ENCODE measurements at regions of chr2 and their contacts with region 1.

Region 1: DNA sequence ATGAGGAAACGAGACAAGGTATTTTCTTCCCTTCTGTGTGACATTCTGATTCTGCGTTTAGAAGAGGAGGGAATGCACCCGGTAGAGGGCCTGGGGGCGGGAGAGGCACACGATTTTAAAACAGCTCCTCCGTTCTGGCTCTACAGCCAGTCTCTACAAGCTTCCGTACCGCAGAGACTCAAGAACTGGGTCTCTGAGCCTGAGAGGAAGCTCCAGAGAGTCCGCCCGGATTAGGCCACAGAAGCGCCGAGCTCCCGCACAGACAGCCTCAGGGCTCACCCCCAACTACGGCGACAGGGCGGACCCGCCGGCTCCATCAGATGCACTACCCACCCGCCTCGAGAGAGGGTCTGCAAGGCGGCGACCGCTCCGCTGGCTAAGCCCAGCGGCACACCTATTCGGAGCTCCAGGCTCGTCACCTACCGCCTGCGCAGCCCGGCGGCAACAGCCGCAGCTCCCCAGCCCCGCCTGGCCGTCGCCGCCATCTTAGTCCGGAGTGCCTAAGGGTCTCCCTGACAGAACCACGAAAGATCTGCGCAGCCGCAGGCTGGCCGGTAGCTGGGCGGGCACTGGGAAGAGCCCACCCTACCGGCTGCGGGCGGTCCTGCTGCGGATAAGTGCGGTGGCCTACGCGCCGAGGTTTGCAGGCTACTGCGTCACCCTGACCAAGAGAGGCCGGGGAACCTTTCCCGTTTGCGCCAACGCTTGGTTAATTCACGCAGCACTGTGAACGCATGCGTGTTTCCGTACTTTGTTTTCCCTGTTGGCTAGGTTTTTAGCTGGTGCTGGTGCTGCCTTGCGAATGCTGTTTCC is at the start of gene NFU1:
- DNase-seq: peak; percentile 79
- ATAC-seq: peak; percentile 97
- H3K4me3 ChIP-seq: peak within 1 kb of the TSS; percentile 76
- H3K27ac ChIP-seq: peak within 1 kb of the TSS; percentile 89
- H3K4me1 ChIP-seq: peaks cover 9% of the 10 kb centered on the region; the same call in 1 of the 2 replicates
- H3K27me3 ChIP-seq: no peaks in the 10 kb centered on the region
- CTCF ChIP-seq: peak; percentile 61 to 76 (median 63)
- EP300 ChIP-seq: peak; percentile 21 to 73; a peak in 2 of 4 replicates
- POLR2A ChIP-seq: peak; percentile 98
- RAD21 ChIP-seq: peak; percentile 24; the same call in 1 of the 2 replicates
- polyA plus RNA-seq, gene NFU1: 38.5 to 61.2 TPM

Region 2: DNA sequence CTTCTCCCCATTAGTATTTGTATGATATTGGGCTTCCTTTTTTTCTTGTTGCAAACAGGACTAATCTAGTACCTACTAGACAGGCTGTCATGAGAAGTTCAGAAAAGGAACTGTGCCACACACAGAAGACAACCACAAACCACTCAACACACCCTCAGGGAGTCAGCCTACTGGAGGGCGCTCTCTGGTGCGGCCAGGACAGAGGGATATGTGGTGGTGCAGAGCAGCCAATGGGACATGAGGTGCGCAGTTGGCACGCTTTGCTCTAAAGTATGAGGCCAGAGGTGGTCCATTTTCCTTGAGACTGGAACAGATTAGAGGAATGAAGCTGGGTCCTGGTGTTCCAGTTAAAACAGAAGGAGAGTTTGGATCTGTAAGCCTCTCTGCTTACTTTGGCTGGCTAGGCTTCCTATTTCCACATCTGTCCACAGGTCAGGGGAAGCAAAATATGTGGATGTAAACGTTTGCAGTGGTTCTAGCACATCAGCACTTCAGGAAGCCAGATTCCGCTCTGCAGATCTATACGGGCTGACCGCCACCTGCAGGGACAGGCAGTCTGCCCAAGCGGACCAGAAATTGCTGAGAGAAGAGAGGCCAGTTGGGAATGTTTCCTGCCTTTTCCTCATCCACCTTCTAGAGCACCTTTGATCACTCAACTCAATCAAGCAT is 164.2 kb before region 1 on chr2:
- CTCF ChIA-PET with region 1: no interaction called
- POLR2A ChIA-PET with region 1: no interaction called
- RAD21 ChIA-PET with region 1: no interaction called
- SMC1A ChIA-PET with region 1: no interaction called
- in situ Hi-C with region 1: no loop called
- intact Hi-C with region 1: no loop called
- DNase-seq: no peak
- ATAC-seq: 0 out of 3 replicates have a peak, but pooled peaks have one; percentile 18
- H3K4me3 ChIP-seq: no peak overlapping the region
- H3K27ac ChIP-seq: no peak overlapping the region
- H3K4me1 ChIP-seq: no peaks in the 10 kb centered on the region
- H3K27me3 ChIP-seq: 0 out of 4 replicates have a peak, but pooled peaks cover 0 to 2% of the 10 kb centered on the region in 2 experiments
- CTCF ChIP-seq: no peak
- EP300 ChIP-seq: no peak
- POLR2A ChIP-seq: no peak
- RAD21 ChIP-seq: no peak

Region 3: GRCh38 chr2:69375494-69376353 is 61.4 kb before region 1 on chr2:
- CTCF ChIA-PET with region 1: interaction called, 24 read pairs
- POLR2A ChIA-PET with region 1: interaction called, 6 read pairs
- RAD21 ChIA-PET with region 1: interaction called, 27 read pairs
- SMC1A ChIA-PET with region 1: interaction called, 4 read pairs
- in situ Hi-C with region 1: no loop called
- intact Hi-C with region 1: no loop called
- DNase-seq: no peak
- ATAC-seq: peak; percentile 90
- H3K4me3 ChIP-seq: no peak overlapping the region
- H3K27ac ChIP-seq: no peak overlapping the region
- H3K4me1 ChIP-seq: no peaks in the 10 kb centered on the region
- H3K27me3 ChIP-seq: no peaks in the 10 kb centered on the region
- CTCF ChIP-seq: peak; percentile 49 to 63 (median 62); a peak in 5 of 6 replicates
- EP300 ChIP-seq: no peak
- POLR2A ChIP-seq: no peak
- RAD21 ChIP-seq: peak; percentile 61

Region 4: DNA sequence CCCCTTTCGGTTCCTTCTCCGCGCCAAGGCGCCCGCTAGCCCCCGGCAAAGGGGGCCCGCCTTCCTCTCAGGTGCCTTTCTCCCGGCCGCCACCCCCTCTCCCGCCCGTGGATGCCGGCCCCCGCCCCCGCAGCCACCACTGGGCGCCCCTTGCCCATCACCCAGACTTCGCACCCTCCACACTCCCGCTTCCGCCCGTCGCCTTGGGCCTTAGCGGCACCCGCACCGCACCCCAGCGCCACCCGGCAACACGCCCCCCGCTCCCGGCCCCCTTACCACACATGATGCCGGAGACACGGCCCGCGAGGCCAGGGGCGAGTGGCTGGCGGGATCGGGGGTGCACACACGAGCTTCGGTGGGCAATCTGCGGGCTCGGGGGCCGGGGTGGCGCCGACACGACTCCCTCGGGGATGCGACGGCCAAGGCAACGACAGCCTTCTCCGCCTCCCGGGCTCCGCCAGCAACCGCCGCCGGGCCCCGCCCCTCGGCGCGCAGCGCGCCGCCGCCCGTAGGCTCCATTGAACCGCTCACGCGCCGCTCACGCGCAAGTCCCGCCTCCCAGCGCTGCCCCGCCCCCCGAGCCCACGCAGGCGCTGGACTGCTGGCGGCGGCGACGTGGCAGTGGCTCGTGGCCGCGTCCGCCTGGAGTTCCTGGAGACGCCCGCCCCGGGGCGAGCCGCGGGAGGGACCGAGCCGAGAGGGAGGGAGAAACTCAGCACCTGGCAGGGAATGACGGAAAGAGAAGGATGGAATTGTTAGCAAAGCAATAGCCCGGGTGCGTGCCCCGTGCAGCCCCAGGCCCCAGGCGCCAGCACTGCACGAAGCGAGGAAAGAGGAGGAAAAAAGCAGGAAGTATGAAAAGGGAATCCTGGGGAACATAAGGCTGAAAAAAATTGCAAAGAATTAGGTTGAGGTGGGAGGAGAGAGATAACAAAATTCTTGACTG is 50.1 kb before region 1 on chr2 and contains the start of gene GFPT1:
- CTCF ChIA-PET with region 1: interaction called, 17 read pairs
- POLR2A ChIA-PET with region 1: interaction called, 16 read pairs
- RAD21 ChIA-PET with region 1: interaction called, 16 read pairs
- SMC1A ChIA-PET with region 1: interaction called, 9 read pairs
- in situ Hi-C with region 1: no loop called
- intact Hi-C with region 1: loop called (anchors 2 kb)
- DNase-seq: peak; percentile 54
- ATAC-seq: peak; percentile 93
- H3K4me3 ChIP-seq: peak within 1 kb of the TSS; percentile 88
- H3K27ac ChIP-seq: peak within 1 kb of the TSS; percentile 82
- H3K4me1 ChIP-seq: peaks cover 12% of the 10 kb centered on the region; the same call in 1 of the 2 replicates
- H3K27me3 ChIP-seq: no peaks in the 10 kb centered on the region
- CTCF ChIP-seq: no peak
- EP300 ChIP-seq: no peak
- POLR2A ChIP-seq: peak; percentile 95
- RAD21 ChIP-seq: no peak
- polyA plus RNA-seq, gene GFPT1: 10.1 to 13.0 TPM

Region 5: GRCh38 chr2:69405306-69405705 is 31.8 kb before region 1 on chr2:
- CTCF ChIA-PET with region 1: no interaction called
- POLR2A ChIA-PET with region 1: no interaction called
- RAD21 ChIA-PET with region 1: no interaction called
- SMC1A ChIA-PET with region 1: no interaction called
- in situ Hi-C with region 1: no loop called
- intact Hi-C with region 1: no loop called
- DNase-seq: no peak
- ATAC-seq: no peak
- H3K4me3 ChIP-seq: no peak overlapping the region
- H3K27ac ChIP-seq: no peak overlapping the region
- H3K4me1 ChIP-seq: no peaks in the 10 kb centered on the region
- H3K27me3 ChIP-seq: no peaks in the 10 kb centered on the region
- CTCF ChIP-seq: no peak
- EP300 ChIP-seq: no peak
- POLR2A ChIP-seq: no peak
- RAD21 ChIP-seq: no peak

Region 6: DNA sequence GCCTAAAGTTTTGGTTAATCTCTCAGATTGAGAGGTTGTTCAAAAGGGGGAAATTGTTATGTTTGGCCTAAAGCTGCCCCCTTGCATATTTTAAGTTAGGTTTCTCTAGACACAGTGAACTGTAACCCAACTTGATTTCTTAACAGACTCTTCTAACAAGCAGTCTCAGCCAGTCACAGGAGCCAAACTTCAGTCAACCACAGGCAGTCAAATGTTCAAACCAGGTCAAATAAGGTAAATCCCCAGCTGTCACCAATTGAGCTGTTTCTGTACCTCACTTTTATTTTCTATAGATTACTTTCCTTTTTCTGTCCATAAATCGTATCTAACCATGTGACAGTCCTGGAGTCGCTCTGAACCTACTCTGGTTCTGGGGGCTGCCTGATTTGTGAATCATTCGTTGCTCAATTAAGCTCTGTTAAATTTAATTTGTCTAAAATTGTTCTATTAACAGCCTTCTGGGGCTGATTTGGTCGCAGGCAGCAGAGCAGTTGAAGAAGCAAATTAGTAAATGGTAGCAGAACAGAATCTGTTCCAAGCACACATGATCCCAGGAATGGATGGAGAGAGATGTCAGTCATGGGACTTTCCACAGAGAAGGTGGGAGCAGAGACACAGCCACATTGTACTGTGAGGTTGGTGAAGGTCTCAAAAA is 16.5 kb after region 1 on chr2:
- CTCF ChIA-PET with region 1: interaction called, 18 read pairs
- POLR2A ChIA-PET with region 1: interaction called, 11 read pairs
- RAD21 ChIA-PET with region 1: interaction called, 6 read pairs
- SMC1A ChIA-PET with region 1: interaction called, 12 read pairs
- in situ Hi-C with region 1: no loop called
- intact Hi-C with region 1: no loop called
- DNase-seq: peak; percentile 61
- ATAC-seq: peak; percentile 97
- H3K4me3 ChIP-seq: no peak overlapping the region
- H3K27ac ChIP-seq: peak overlapping the region; percentile 20; the same call in 1 of the 2 replicates
- H3K4me1 ChIP-seq: peaks cover 9% of the 10 kb centered on the region; the same call in 1 of the 2 replicates
- H3K27me3 ChIP-seq: no peaks in the 10 kb centered on the region
- CTCF ChIP-seq: no peak
- EP300 ChIP-seq: no peak
- POLR2A ChIP-seq: no peak
- RAD21 ChIP-seq: no peak

Region 7: GRCh38 chr2:69549421-69549820 is 112.3 kb after region 1 on chr2:
- CTCF ChIA-PET with region 1: interaction called, 4 read pairs
- POLR2A ChIA-PET with region 1: no interaction called
- RAD21 ChIA-PET with region 1: interaction called, 5 read pairs
- SMC1A ChIA-PET with region 1: interaction called, 6 read pairs
- in situ Hi-C with region 1: no loop called
- intact Hi-C with region 1: loop called (anchors 5 kb)
- DNase-seq: no peak
- ATAC-seq: no peak
- H3K4me3 ChIP-seq: no peak overlapping the region
- H3K27ac ChIP-seq: no peak overlapping the region
- H3K4me1 ChIP-seq: peaks cover 27% of the 10 kb centered on the region
- H3K27me3 ChIP-seq: no peaks in the 10 kb centered on the region
- CTCF ChIP-seq: no peak
- EP300 ChIP-seq: no peak
- POLR2A ChIP-seq: no peak
- RAD21 ChIP-seq: no peak

Region 8: DNA sequence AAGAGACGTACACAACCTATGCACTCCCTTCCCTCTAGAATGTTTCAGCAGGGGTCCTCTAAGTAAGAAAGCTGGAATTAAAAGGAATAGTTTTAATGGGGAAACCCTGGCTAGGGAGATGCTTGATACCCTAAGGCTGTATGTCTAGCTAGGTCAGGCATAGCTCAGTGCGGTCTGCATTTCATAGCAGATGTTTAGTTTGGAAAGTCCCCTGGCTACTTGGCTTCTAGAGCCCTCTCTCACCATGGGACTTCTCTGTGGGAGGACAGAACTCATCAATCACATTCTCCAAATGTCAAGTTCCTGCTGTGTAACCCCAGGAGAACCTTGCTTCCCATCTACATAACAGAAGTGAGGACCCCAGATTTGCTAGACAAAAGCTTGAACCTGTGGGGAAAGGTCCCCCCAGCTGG is 280.7 kb after region 1 on chr2:
- CTCF ChIA-PET with region 1: interaction called, 10 read pairs
- POLR2A ChIA-PET with region 1: no interaction called
- RAD21 ChIA-PET with region 1: interaction called, 3 read pairs
- SMC1A ChIA-PET with region 1: interaction called, 15 read pairs
- in situ Hi-C with region 1: no loop called
- intact Hi-C with region 1: loop called (anchors 2 kb)
- DNase-seq: no peak
- ATAC-seq: peak; percentile 82
- H3K4me3 ChIP-seq: no peak overlapping the region
- H3K27ac ChIP-seq: no peak overlapping the region
- H3K4me1 ChIP-seq: peaks cover 12% of the 10 kb centered on the region; the same call in 1 of the 2 replicates
- H3K27me3 ChIP-seq: no peaks in the 10 kb centered on the region
- CTCF ChIP-seq: no peak
- EP300 ChIP-seq: peak in 1 of 2 experiments; percentile 9; a peak in 1 of 4 replicates
- POLR2A ChIP-seq: no peak
- RAD21 ChIP-seq: no peak